Activated CD4-positive, alpha-beta memory T cell treated with anti-CD3 and anti-CD28 coated beads for 36 hours (primary cell): ENCODE measurements at regions of chr2 and their contacts with region 1.

Region 1: GRCh38 chr2:173286153-173286809 is 68.4 kb upstream of the CDCA7 start:
- DNase-seq: peak; percentile 30
- H3K4me3 Mint-ChIP-seq: no peak overlapping the region
- H3K27ac Mint-ChIP-seq: peak overlapping the region; percentile 50
- H3K4me1 Mint-ChIP-seq: peaks cover 23% of the 10 kb centered on the region
- H3K27me3 Mint-ChIP-seq: no peaks in the 10 kb centered on the region

Region 2: GRCh38 chr2:173048897-173049661 is 237.2 kb before region 1 on chr2:
- CTCF ChIA-PET with region 1: no interaction called
- POLR2A ChIA-PET with region 1: no interaction called
- intact Hi-C with region 1: loop called (anchors 1 kb)
- DNase-seq: peak; percentile 74
- H3K4me3 Mint-ChIP-seq: no peak overlapping the region
- H3K27ac Mint-ChIP-seq: no peak overlapping the region
- H3K4me1 Mint-ChIP-seq: peaks cover 15% of the 10 kb centered on the region
- H3K27me3 Mint-ChIP-seq: peaks cover 25% of the 10 kb centered on the region

Region 3: DNA sequence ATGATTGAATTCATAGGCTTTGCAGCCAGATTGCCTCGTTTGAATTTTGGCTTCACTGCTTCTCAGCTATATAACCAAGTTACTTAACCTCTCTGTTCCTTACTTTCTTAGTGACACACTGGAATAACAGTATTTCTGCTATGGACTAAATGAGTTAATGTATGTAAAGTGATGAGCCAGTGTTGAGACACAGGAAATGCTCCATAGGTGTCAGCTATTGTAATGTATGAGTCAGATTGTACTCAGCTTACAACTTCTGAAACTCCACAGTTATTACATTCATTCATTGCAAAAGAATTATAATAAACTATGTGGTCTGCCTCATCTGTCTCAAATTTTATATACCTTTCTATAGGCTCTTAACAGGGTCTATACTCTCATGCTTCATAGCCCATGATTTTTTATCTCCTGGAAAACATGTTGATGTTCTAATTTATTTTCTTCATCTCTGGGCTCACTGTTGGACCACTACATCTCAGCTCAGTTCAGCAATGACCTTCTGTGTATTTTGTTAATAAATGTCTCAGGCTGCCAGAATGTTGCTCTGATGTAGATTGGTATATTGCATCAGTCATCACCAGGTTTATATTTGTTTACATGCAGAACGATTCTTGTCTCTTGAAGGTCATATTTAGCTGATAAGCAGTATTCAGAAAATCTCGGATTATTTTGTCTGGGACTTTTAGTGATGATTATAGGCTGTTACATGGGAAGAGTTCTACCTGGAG is 134.4 kb before region 1 on chr2:
- CTCF ChIA-PET with region 1: no interaction called
- POLR2A ChIA-PET with region 1: no interaction called
- intact Hi-C with region 1: loop called (anchors 1 kb)
- DNase-seq: no peak
- H3K4me3 Mint-ChIP-seq: no peak overlapping the region
- H3K27ac Mint-ChIP-seq: no peak overlapping the region
- H3K4me1 Mint-ChIP-seq: peaks cover 32% of the 10 kb centered on the region
- H3K27me3 Mint-ChIP-seq: peaks cover 16% of the 10 kb centered on the region

Region 4: GRCh38 chr2:173264603-173265366 is 21.5 kb before region 1 on chr2:
- CTCF ChIA-PET with region 1: no interaction called
- POLR2A ChIA-PET with region 1: no interaction called
- intact Hi-C with region 1: loop called (anchors 1 kb)
- DNase-seq: peak; percentile 55
- H3K4me3 Mint-ChIP-seq: peak overlapping the region; percentile 14
- H3K27ac Mint-ChIP-seq: no peak overlapping the region
- H3K4me1 Mint-ChIP-seq: peaks cover 12% of the 10 kb centered on the region
- H3K27me3 Mint-ChIP-seq: peaks cover 8% of the 10 kb centered on the region

Region 5: GRCh38 chr2:173298536-173299097 is 12.3 kb after region 1 on chr2:
- CTCF ChIA-PET with region 1: no interaction called
- POLR2A ChIA-PET with region 1: no interaction called
- intact Hi-C with region 1: no loop called
- DNase-seq: no peak
- H3K4me3 Mint-ChIP-seq: no peak overlapping the region
- H3K27ac Mint-ChIP-seq: no peak overlapping the region
- H3K4me1 Mint-ChIP-seq: peaks cover 9% of the 10 kb centered on the region
- H3K27me3 Mint-ChIP-seq: peaks cover 6% of the 10 kb centered on the region

Region 6: DNA sequence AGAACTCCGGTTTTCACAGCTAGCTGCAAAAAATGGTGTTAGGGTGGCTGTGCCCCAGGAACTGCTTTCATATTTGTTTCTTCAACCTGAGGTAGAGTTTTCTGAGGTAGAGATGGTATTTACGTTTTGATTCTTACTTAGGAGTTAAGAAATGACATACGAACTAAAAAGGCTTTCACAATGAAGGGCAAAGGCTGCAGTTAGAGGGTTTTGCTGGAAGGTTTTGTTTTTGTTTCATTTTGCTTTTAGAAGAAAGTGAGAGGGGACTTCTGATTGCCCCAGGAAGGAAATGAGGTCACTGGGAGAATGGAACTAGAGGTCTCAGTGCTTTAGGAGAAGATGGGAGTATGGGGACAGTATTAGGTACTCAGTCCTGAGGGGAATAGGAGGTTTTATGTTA is 83.9 kb after region 1 on chr2:
- CTCF ChIA-PET with region 1: interaction called, 3 read pairs
- POLR2A ChIA-PET with region 1: no interaction called
- intact Hi-C with region 1: loop called (anchors 5 kb)
- DNase-seq: no peak
- H3K4me3 Mint-ChIP-seq: no peak overlapping the region
- H3K27ac Mint-ChIP-seq: peak overlapping the region; percentile 57
- H3K4me1 Mint-ChIP-seq: peaks cover 23% of the 10 kb centered on the region
- H3K27me3 Mint-ChIP-seq: no peaks in the 10 kb centered on the region

Region 7: DNA sequence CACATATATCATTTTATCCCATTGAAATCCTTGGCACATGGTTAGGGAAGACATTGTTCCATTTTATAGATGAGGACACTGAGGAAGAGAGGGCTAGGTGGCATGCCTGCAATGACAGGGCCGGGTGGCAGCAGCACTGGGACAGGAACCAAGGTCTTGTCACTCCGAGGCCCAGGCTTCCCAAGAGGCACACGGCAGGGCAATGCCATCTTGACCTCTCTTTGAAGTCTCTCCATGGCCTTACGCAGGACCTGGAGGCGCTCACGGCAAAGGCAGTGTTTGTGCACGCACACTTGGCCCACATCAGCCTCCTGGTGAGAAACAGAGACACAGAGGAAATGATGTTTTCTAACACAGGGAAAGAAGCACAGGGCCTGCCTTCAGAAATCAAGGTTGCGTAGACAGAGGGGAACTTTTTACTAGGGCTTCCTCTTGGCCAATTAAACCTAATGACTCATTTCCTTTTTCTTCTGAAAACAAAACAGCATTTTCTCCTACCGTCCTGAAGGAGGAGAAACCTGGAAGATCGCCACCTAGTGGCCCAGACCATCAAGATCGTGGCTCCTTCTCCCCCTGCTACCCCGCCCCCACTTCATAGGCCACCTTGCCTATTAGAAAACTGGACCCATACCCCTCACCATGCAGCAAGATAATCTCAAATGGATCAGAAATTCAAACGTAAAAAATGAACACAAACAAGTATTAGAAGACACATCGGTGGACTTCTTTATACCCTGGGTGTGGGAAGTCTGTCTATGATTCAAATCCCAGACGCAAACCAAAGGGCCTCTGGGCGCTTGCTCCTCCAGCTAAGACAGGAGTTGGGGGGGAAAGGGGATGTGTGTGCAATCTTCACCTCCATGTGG is 753.5 kb after region 1 on chr2:
- CTCF ChIA-PET with region 1: no interaction called
- POLR2A ChIA-PET with region 1: no interaction called
- intact Hi-C with region 1: loop called (anchors 10 kb)
- DNase-seq: peak; percentile 90
- H3K4me3 Mint-ChIP-seq: peak overlapping the region; percentile 43
- H3K27ac Mint-ChIP-seq: peak overlapping the region; percentile 86
- H3K4me1 Mint-ChIP-seq: peaks cover 17% of the 10 kb centered on the region
- H3K27me3 Mint-ChIP-seq: peaks cover 7% of the 10 kb centered on the region